ENCODE measurements at regions of chr14 and their contacts with region 1.

Region 1: DNA sequence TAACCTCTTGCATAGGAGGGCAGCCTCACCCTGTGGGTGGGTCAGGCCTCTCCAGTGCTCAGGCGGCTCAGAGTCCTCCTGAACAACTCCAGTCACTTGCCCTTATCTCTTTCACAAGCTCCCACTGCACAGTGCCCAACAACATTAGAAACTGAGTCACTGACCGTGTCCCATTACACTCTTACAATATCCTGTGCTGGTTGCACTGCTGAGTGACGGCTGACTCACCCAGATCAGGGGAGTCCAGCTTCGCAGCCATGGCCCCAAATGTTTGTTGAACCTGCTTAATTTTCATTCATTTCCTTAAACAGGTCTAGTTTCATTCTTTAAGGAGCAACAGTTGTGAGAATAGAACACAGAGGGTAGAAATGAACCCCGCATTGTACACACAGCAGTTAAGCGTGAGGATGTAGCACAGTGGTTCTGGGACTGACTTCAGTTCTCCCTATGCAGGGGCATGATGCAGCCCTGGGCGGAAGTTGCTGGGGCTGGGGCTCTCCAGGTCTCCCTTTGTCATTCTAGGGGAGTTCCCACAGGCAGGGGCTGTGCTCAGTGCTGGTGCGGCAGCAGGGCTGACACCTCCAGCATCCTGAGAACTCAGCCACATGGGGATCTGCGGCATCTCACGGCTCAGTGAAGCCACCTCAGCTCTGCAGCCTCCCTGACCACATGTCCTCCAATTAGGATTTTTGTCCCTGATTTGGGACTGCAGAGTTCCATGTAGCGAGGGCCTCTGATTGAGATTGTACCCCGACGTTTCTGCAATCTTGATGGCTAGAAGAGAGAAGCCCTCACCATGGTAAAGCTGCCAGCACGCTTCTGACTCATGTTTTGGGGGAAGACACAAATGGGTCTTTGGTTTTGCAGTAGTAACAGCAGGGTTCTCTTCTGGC is 16.1 kb downstream of the GPR68 start:
- DNase-seq: peak; percentile 95
- H3K4me3 Mint-ChIP-seq: peak overlapping the region; percentile 59
- H3K27ac Mint-ChIP-seq: peak overlapping the region; percentile 94
- H3K4me1 Mint-ChIP-seq: peaks cover 94% of the 10 kb centered on the region
- H3K27me3 Mint-ChIP-seq: no peaks in the 10 kb centered on the region

Region 2: DNA sequence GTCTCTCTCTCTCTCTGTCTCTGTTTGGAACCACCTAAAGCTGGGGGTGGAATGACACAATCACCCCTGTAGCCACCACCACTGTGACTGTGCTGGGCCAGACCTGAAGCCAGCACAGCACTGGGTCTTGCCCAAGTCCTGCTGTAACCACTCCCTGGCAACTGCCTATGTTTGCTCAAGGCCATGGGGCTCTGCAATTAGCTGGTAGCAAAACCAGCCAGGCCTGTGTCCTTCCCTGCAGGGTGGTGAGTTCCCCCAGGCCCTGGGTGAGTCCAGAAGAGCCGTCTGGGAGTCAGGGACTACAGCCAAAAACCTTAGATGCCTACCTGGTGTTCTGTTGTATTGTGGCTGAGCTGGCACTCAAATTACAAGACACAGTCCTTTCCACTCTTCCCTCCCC is 63.7 kb before region 1 on chr14:
- CTCF ChIA-PET with region 1: no interaction called
- POLR2A ChIA-PET with region 1: no interaction called
- intact Hi-C with region 1: no loop called
- DNase-seq: no peak
- H3K4me3 Mint-ChIP-seq: no peak overlapping the region
- H3K27ac Mint-ChIP-seq: no peak overlapping the region
- H3K4me1 Mint-ChIP-seq: no peaks in the 10 kb centered on the region
- H3K27me3 Mint-ChIP-seq: no peaks in the 10 kb centered on the region

Region 3: GRCh38 chr14:91193069-91193468 is 35.3 kb before region 1 on chr14:
- CTCF ChIA-PET with region 1: no interaction called
- POLR2A ChIA-PET with region 1: interaction called, 5 read pairs
- intact Hi-C with region 1: loop called (anchors 1 kb)
- DNase-seq: no peak
- H3K4me3 Mint-ChIP-seq: no peak overlapping the region
- H3K27ac Mint-ChIP-seq: no peak overlapping the region
- H3K4me1 Mint-ChIP-seq: peaks cover 15% of the 10 kb centered on the region
- H3K27me3 Mint-ChIP-seq: no peaks in the 10 kb centered on the region

Region 4: GRCh38 chr14:91264151-91265150 is 36.1 kb after region 1 on chr14:
- CTCF ChIA-PET with region 1: no interaction called
- POLR2A ChIA-PET with region 1: interaction called, 7 read pairs
- intact Hi-C with region 1: loop called (anchors 5 kb)
- DNase-seq: peak; percentile 41
- H3K4me3 Mint-ChIP-seq: peak overlapping the region; percentile 59
- H3K27ac Mint-ChIP-seq: peak overlapping the region; percentile 50
- H3K4me1 Mint-ChIP-seq: peaks cover 60% of the 10 kb centered on the region
- H3K27me3 Mint-ChIP-seq: no peaks in the 10 kb centered on the region

Region 5: GRCh38 chr14:91317381-91318308 is 89.3 kb after region 1 on chr14:
- CTCF ChIA-PET with region 1: no interaction called
- POLR2A ChIA-PET with region 1: no interaction called
- intact Hi-C with region 1: loop called (anchors 1 kb)
- DNase-seq: peak; percentile 92
- H3K4me3 Mint-ChIP-seq: peak overlapping the region; percentile 60
- H3K27ac Mint-ChIP-seq: peak overlapping the region; percentile 94
- H3K4me1 Mint-ChIP-seq: peaks cover 78% of the 10 kb centered on the region
- H3K27me3 Mint-ChIP-seq: no peaks in the 10 kb centered on the region

Region 6: DNA sequence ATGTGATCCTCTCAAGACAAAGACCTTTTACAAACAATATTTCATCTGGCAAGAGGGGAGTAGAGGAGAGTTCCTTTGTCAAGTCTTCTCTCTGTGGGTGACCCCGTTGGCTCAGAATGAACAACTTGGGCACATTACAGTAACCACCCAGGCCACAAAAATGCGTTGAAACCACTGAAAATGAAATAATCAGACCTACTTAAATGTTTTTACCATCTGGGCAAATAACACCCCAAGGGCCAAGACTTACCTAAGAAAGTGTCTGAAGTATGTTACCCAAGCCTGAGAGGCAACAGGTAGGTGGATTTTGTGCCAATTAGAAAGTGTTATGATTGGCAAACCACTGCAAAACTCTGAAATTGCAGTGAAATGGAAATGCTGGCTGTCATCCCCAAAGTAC is 637.7 kb after region 1 on chr14:
- CTCF ChIA-PET with region 1: no interaction called
- POLR2A ChIA-PET with region 1: no interaction called
- intact Hi-C with region 1: loop called (anchors 2 kb)
- DNase-seq: peak; percentile 73
- H3K4me3 Mint-ChIP-seq: peak overlapping the region; percentile 87
- H3K27ac Mint-ChIP-seq: peak overlapping the region; percentile 94
- H3K4me1 Mint-ChIP-seq: peaks cover 92% of the 10 kb centered on the region
- H3K27me3 Mint-ChIP-seq: no peaks in the 10 kb centered on the region

Measured in activated CD4-positive, alpha-beta memory T cell treated with anti-CD3 and anti-CD28 coated beads for 36 hours (primary cell).